ENCODE measurements at regions of chr6 and their contacts with region 1.

Region 1: DNA sequence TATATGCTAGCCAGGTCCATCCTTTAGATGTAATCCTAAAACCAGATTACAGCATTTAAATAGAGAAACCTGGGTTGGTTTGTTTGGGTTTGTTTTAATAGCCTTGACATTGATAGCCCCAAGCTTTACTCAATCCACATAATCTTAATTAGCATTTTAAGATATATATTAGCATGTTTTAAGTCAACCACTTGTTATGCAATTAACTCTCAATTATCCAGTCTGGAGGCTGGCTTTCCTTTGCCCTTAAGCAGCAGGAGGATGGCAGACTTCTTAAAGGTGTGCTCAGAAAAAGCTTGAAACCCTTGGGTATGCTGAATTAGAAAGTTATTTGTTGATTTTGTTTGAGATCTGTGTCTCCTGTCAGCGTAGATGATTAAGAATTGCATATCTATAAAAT is 46.3 kb upstream of the SMIM28 start:
- DNase-seq: no peak
- ATAC-seq: no peak
- H3K4me3 ChIP-seq: no peak overlapping the region
- H3K27ac ChIP-seq: no peak overlapping the region
- H3K4me1 ChIP-seq: no peaks in the 10 kb centered on the region
- H3K27me3 ChIP-seq: no peaks in the 10 kb centered on the region
- CTCF ChIP-seq: no peak

Region 2: DNA sequence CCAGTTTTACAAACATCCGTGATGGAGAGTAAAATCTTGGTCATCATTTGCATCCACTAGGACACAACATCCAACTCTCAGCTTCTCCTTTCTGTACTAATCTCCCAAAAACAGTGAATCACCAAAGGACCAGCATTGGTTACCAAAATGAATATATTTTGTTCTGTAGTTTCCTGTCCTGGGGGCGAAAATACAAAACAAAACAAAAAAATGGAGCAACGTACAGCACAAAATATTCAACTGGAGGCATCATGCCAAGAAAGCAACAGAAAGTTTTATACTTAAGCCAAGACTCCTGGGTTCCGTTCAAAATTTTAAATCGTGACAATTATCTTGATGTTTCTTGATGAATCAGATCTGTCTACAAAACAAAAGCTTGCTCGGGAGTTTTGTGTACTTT is 315.6 kb after region 1 on chr6:
- CTCF ChIA-PET with region 1: no interaction called
- POLR2A ChIA-PET with region 1: interaction called, 16 read pairs
- in situ Hi-C with region 1: no loop called
- intact Hi-C with region 1: no loop called
- DNase-seq: no peak
- ATAC-seq: no peak
- H3K4me3 ChIP-seq: no peak overlapping the region
- H3K27ac ChIP-seq: no peak overlapping the region
- H3K4me1 ChIP-seq: no peaks in the 10 kb centered on the region
- H3K27me3 ChIP-seq: no peaks in the 10 kb centered on the region
- CTCF ChIP-seq: no peak

Measured in Panc1 (cell line).